Activated CD4-positive, alpha-beta memory T cell treated with anti-CD3 and anti-CD28 coated beads for 36 hours (primary cell): ENCODE measurements at regions of chr6 and their contacts with region 1.

Region 1: GRCh38 chr6:109705258-109705657 is 14.2 kb downstream of the FIG4 start:
- DNase-seq: peak; percentile 87
- H3K4me3 Mint-ChIP-seq: no peak overlapping the region
- H3K27ac Mint-ChIP-seq: no peak overlapping the region
- H3K4me1 Mint-ChIP-seq: peaks cover 2% of the 10 kb centered on the region
- H3K27me3 Mint-ChIP-seq: no peaks in the 10 kb centered on the region

Region 2: GRCh38 chr6:107716688-107717089 is 1988.6 kb before region 1 on chr6:
- CTCF ChIA-PET with region 1: no interaction called
- POLR2A ChIA-PET with region 1: no interaction called
- intact Hi-C with region 1: no loop called
- DNase-seq: peak; percentile 86
- H3K4me3 Mint-ChIP-seq: peak overlapping the region; percentile 64
- H3K27ac Mint-ChIP-seq: peak overlapping the region; percentile 84
- H3K4me1 Mint-ChIP-seq: peaks cover 70% of the 10 kb centered on the region
- H3K27me3 Mint-ChIP-seq: no peaks in the 10 kb centered on the region

Region 3: GRCh38 chr6:109526905-109527628 is 178.2 kb before region 1 on chr6:
- CTCF ChIA-PET with region 1: no interaction called
- POLR2A ChIA-PET with region 1: no interaction called
- intact Hi-C with region 1: loop called (anchors 2 kb)
- DNase-seq: peak; percentile 45
- H3K4me3 Mint-ChIP-seq: no peak overlapping the region
- H3K27ac Mint-ChIP-seq: no peak overlapping the region
- H3K4me1 Mint-ChIP-seq: no peaks in the 10 kb centered on the region
- H3K27me3 Mint-ChIP-seq: no peaks in the 10 kb centered on the region

Region 4: GRCh38 chr6:109783250-109783986 is 78.2 kb after region 1 on chr6:
- CTCF ChIA-PET with region 1: interaction called, 7 read pairs
- POLR2A ChIA-PET with region 1: no interaction called
- intact Hi-C with region 1: loop called (anchors 5 kb)
- DNase-seq: no peak
- H3K4me3 Mint-ChIP-seq: no peak overlapping the region
- H3K27ac Mint-ChIP-seq: no peak overlapping the region
- H3K4me1 Mint-ChIP-seq: no peaks in the 10 kb centered on the region
- H3K27me3 Mint-ChIP-seq: no peaks in the 10 kb centered on the region

Region 5: DNA sequence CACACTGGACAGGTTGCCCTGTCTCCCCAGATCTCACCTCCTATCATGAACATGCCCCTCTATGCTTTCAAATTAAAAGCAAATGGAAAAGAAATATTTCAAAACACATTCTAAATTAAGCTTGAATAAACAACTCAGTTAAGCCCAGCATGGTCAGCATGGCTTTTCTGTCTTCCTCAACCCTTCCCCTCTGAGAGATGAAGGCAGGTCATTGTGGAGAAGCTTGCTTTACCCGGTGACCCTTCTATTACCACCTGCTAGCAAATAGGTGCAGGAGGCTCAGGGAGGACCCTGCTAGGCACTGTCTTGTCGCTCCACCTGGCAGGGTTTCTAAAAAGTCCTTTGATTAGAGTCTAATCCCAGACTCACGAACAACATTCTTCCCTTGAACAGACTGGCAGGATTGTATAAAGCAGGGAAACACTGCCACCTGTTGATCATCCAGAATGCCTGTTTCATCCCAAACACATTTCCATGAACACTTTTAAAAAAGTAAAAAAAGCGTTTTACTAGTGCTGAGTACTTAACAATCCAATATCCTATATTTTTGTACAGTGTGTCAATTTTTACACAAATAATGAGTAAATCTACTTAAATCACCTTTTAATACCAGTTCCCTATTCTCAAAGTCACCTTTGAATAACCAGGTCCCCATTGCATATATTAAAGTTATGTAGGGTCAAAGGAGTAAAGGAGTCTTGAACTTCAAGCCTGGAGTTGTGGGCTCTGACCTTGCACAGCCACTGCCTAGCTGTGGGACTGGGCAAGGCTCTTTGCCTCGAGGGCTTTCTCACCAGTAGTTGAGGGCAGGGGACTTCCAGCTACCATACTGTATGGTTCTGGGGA is 348.4 kb after region 1 on chr6:
- CTCF ChIA-PET with region 1: interaction called, 12 read pairs
- POLR2A ChIA-PET with region 1: no interaction called
- intact Hi-C with region 1: no loop called
- DNase-seq: no peak
- H3K4me3 Mint-ChIP-seq: no peak overlapping the region
- H3K27ac Mint-ChIP-seq: no peak overlapping the region
- H3K4me1 Mint-ChIP-seq: no peaks in the 10 kb centered on the region
- H3K27me3 Mint-ChIP-seq: no peaks in the 10 kb centered on the region

Region 6: GRCh38 chr6:110389689-110390382 is 684.6 kb after region 1 on chr6:
- CTCF ChIA-PET with region 1: interaction called, 35 read pairs
- POLR2A ChIA-PET with region 1: no interaction called
- intact Hi-C with region 1: loop called (anchors 1 kb)
- DNase-seq: no peak
- H3K4me3 Mint-ChIP-seq: no peak overlapping the region
- H3K27ac Mint-ChIP-seq: no peak overlapping the region
- H3K4me1 Mint-ChIP-seq: peaks cover 2% of the 10 kb centered on the region
- H3K27me3 Mint-ChIP-seq: no peaks in the 10 kb centered on the region